ENCODE measurements at regions of chr2 and their contacts with region 1.

Region 1: GRCh38 chr2:219029829-219030165 is 11.5 kb downstream of the CFAP65 start:
- DNase-seq: peak; percentile 65
- ATAC-seq: peak; percentile 87
- H3K4me3 Mint-ChIP-seq: no peak overlapping the region
- H3K27ac Mint-ChIP-seq: no peak overlapping the region
- H3K4me1 Mint-ChIP-seq: no peaks in the 10 kb centered on the region
- H3K27me3 Mint-ChIP-seq: peaks cover 35% of the 10 kb centered on the region
- CTCF ChIP-seq: no peak

Region 2: DNA sequence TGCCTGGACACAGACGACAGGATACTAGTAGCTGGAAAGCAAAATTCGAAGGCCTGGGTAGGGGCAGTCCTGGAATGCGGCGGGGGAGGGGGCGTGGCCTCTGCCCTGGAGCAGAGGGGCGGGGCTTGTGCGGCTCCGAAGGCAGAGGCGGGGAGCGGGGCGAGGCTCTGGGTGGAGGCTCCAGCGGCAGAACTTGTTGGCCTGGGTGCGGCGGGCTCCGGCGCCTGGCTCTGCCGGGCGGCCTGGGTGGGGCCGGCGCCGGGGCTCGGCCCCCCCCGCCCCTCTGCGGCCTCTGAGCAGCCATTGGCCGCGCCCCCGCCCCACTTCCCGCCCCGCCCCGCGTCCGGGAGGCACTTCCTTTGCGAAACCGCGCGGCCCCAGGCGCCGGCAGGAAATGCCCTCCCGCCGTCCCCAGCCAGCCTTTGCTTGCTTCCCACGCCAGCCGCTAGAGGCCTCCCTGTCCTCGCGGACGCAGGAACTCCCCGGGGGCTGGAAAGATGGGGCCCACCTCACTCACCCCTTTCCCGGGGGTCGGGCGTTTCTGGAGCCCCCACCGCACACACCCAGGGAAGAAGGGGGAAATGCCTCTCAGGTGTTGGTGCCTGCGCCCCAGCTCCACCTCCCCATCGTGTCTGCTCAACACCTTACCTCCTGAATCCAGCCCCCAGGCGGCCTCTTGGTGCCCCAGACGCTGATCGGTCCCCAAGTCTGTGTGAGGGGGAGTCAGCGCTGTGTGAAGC is 623.4 kb before region 1 on chr2:
- CTCF ChIA-PET with region 1: no interaction called
- POLR2A ChIA-PET with region 1: no interaction called
- intact Hi-C with region 1: no loop called
- DNase-seq: peak; percentile 89
- ATAC-seq: peak; percentile 83
- H3K4me3 Mint-ChIP-seq: peak overlapping the region; percentile 85
- H3K27ac Mint-ChIP-seq: peak overlapping the region; percentile 86
- H3K4me1 Mint-ChIP-seq: peaks cover 54% of the 10 kb centered on the region
- H3K27me3 Mint-ChIP-seq: no peaks in the 10 kb centered on the region
- CTCF ChIP-seq: no peak

Region 3: GRCh38 chr2:219119422-219120043 is 89.7 kb after region 1 on chr2:
- CTCF ChIA-PET with region 1: interaction called, 10 read pairs
- POLR2A ChIA-PET with region 1: no interaction called
- intact Hi-C with region 1: loop called (anchors 1 kb)
- DNase-seq: peak; percentile 27
- ATAC-seq: peak; percentile 50
- H3K4me3 Mint-ChIP-seq: no peak overlapping the region
- H3K27ac Mint-ChIP-seq: no peak overlapping the region
- H3K4me1 Mint-ChIP-seq: no peaks in the 10 kb centered on the region
- H3K27me3 Mint-ChIP-seq: no peaks in the 10 kb centered on the region
- CTCF ChIP-seq: no peak

Region 4: GRCh38 chr2:219155054-219155644 is 125.4 kb after region 1 on chr2:
- CTCF ChIA-PET with region 1: interaction called, 40 read pairs
- POLR2A ChIA-PET with region 1: no interaction called
- intact Hi-C with region 1: loop called (anchors 1 kb)
- DNase-seq: no peak
- ATAC-seq: peak; percentile 27
- H3K4me3 Mint-ChIP-seq: no peak overlapping the region
- H3K27ac Mint-ChIP-seq: no peak overlapping the region
- H3K4me1 Mint-ChIP-seq: peaks cover 7% of the 10 kb centered on the region
- H3K27me3 Mint-ChIP-seq: no peaks in the 10 kb centered on the region
- CTCF ChIP-seq: peak; percentile 77

Region 5: GRCh38 chr2:219245148-219245898 is 215.5 kb after region 1 on chr2 and contains the starts of genes GLB1L and STK16:
- CTCF ChIA-PET with region 1: no interaction called
- POLR2A ChIA-PET with region 1: no interaction called
- intact Hi-C with region 1: no loop called
- DNase-seq: peak; percentile 95
- ATAC-seq: peak; percentile 64
- H3K4me3 Mint-ChIP-seq: peak within 1 kb of the TSS; percentile 90
- H3K27ac Mint-ChIP-seq: peak within 1 kb of the TSS; percentile 98
- H3K4me1 Mint-ChIP-seq: peaks cover 57% of the 10 kb centered on the region
- H3K27me3 Mint-ChIP-seq: no peaks in the 10 kb centered on the region
- CTCF ChIP-seq: no peak
- total RNA-seq, gene GLB1L: 4.5 and 4.6 TPM in 2 replicates
- total RNA-seq, gene STK16: 31.0 and 36.5 TPM in 2 replicates

Region 6: GRCh38 chr2:220015576-220015975 is 985.8 kb after region 1 on chr2:
- CTCF ChIA-PET with region 1: no interaction called
- POLR2A ChIA-PET with region 1: no interaction called
- intact Hi-C with region 1: no loop called
- DNase-seq: no peak
- ATAC-seq: no peak
- H3K4me3 Mint-ChIP-seq: no peak overlapping the region
- H3K27ac Mint-ChIP-seq: no peak overlapping the region
- H3K4me1 Mint-ChIP-seq: no peaks in the 10 kb centered on the region
- H3K27me3 Mint-ChIP-seq: no peaks in the 10 kb centered on the region
- CTCF ChIP-seq: no peak

Measured in activated B cell treated with CpG ODN at 0.5 μM for 24 hours (primary cell).